ENCODE measurements at regions of chr2 and their contacts with region 1.

Region 1: GRCh38 chr2:73985308-73986084 is 786 bp downstream of the TET3 start:
- DNase-seq: peak; percentile 76 to 90 (median 87)
- H3K4me3 ChIP-seq: peak overlapping the region; percentile 69 to 83 (median 78)
- H3K4me3 Mint-ChIP-seq: peak overlapping the region; percentile 93 to 94
- H3K27ac ChIP-seq: peak overlapping the region; percentile 85 to 94
- H3K27ac Mint-ChIP-seq: peak overlapping the region; percentile 88 to 94 (median 93)
- H3K4me1 ChIP-seq: peaks cover 73 to 89% of the 10 kb centered on the region in 2 donors
- H3K4me1 Mint-ChIP-seq: peaks cover 82% of the 10 kb centered on the region
- H3K27me3 ChIP-seq: no peaks in the 10 kb centered on the region
- H3K27me3 Mint-ChIP-seq: peaks cover 0 to 3% (median 0%) of the 10 kb centered on the region in 3 donors
- CTCF ChIP-seq: no peak

Region 2: GRCh38 chr2:73828818-73829570 is 156.5 kb before region 1 on chr2 and contains the start of gene STAMBP:
- intact Hi-C with region 1: loop called in 1 of 2 experiments (anchors 10 kb)
- DNase-seq: peak; percentile 92 to 97 (median 95)
- H3K4me3 ChIP-seq: peak within 1 kb of the TSS; percentile 61 to 83 (median 69)
- H3K4me3 Mint-ChIP-seq: peak within 1 kb of the TSS; percentile 92 to 96
- H3K27ac ChIP-seq: peak within 1 kb of the TSS; percentile 79 to 94
- H3K27ac Mint-ChIP-seq: peak within 1 kb of the TSS; percentile 94 to 99 (median 98)
- H3K4me1 ChIP-seq: peaks cover 14 to 26% of the 10 kb centered on the region in 2 donors
- H3K4me1 Mint-ChIP-seq: peaks cover 25% of the 10 kb centered on the region
- H3K27me3 ChIP-seq: no peaks in the 10 kb centered on the region
- H3K27me3 Mint-ChIP-seq: peaks cover 0 to 2% (median 2%) of the 10 kb centered on the region in 3 donors
- CTCF ChIP-seq: no peak
- polyA plus RNA-seq, gene STAMBP: 26.0 to 40.8 (median 40.7) TPM

Region 3: GRCh38 chr2:73926493-73927338 is 58.8 kb before region 1 on chr2 and contains the start of gene DGUOK:
- intact Hi-C with region 1: loop called (anchors 5 kb)
- DNase-seq: peak; percentile 99 to 100 (median 99)
- H3K4me3 ChIP-seq: peak within 1 kb of the TSS; percentile 60 to 76 (median 74)
- H3K4me3 Mint-ChIP-seq: peak within 1 kb of the TSS; percentile 80 to 92
- H3K27ac ChIP-seq: peak within 1 kb of the TSS; percentile 98
- H3K27ac Mint-ChIP-seq: peak within 1 kb of the TSS; percentile 97 to 99 (median 98)
- H3K4me1 ChIP-seq: peaks cover 53 to 72% of the 10 kb centered on the region in 2 donors
- H3K4me1 Mint-ChIP-seq: peaks cover 59% of the 10 kb centered on the region
- H3K27me3 ChIP-seq: no peaks in the 10 kb centered on the region
- H3K27me3 Mint-ChIP-seq: peaks cover 0 to 2% (median 0%) of the 10 kb centered on the region in 3 donors
- CTCF ChIP-seq: no peak
- polyA plus RNA-seq, gene DGUOK: 62.9 to 129 (median 123) TPM

Region 4: GRCh38 chr2:73931531-73932500 is 53.7 kb before region 1 on chr2:
- intact Hi-C with region 1: loop called (anchors 5 kb)
- DNase-seq: peak in 2 of 3 donors; percentile 28 to 66
- H3K4me3 ChIP-seq: no peak overlapping the region
- H3K4me3 Mint-ChIP-seq: no peak overlapping the region
- H3K27ac ChIP-seq: peak overlapping the region in 1 of 2 donors; percentile 61
- H3K27ac Mint-ChIP-seq: peak overlapping the region in 5 of 7 donors; percentile 35 to 81 (median 67)
- H3K4me1 ChIP-seq: peaks cover 40 to 57% of the 10 kb centered on the region in 2 donors
- H3K4me1 Mint-ChIP-seq: peaks cover 60% of the 10 kb centered on the region
- H3K27me3 ChIP-seq: no peaks in the 10 kb centered on the region
- H3K27me3 Mint-ChIP-seq: peaks cover 0 to 2% (median 0%) of the 10 kb centered on the region in 3 donors
- CTCF ChIP-seq: no peak

Region 5: DNA sequence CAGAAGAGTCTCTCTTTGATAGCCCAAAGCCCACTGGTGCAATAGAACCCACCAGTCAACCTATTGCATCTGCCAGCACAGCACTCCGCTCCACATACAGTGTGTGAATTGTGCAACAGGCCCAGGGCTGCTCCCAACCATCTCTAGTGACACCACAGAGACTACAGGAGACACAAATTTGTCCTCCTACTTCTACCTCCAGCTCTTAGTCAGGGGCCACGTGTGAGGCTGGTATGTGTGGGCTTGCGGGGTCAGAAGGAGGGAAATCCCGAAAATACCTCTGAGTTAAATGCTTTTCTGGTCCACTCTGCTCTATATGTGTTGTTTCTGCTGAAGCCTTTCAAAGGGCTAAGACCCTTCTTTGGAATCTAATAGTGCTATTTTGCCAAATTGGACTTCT is 40.8 kb before region 1 on chr2:
- intact Hi-C with region 1: loop called in 1 of 2 experiments (anchors 5 kb)
- DNase-seq: no peak
- H3K4me3 ChIP-seq: no peak overlapping the region
- H3K4me3 Mint-ChIP-seq: no peak overlapping the region
- H3K27ac ChIP-seq: peak overlapping the region in 1 of 2 donors; percentile 33
- H3K27ac Mint-ChIP-seq: peak overlapping the region in 3 of 7 donors; percentile 6 to 57 (median 34)
- H3K4me1 ChIP-seq: peaks cover 36% of the 10 kb centered on the region in 2 donors
- H3K4me1 Mint-ChIP-seq: peaks cover 49% of the 10 kb centered on the region
- H3K27me3 ChIP-seq: no peaks in the 10 kb centered on the region
- H3K27me3 Mint-ChIP-seq: no peaks in the 10 kb centered on the region
- CTCF ChIP-seq: no peak

Region 6: GRCh38 chr2:73952499-73953458 is 32.7 kb before region 1 on chr2:
- intact Hi-C with region 1: loop called (anchors 5 kb)
- DNase-seq: peak; percentile 72 to 89 (median 82)
- H3K4me3 ChIP-seq: peak overlapping the region in 1 of 3 experiments; percentile 13
- H3K4me3 Mint-ChIP-seq: peak overlapping the region in 1 of 2 donors; percentile 65
- H3K27ac ChIP-seq: peak overlapping the region; percentile 39 to 64
- H3K27ac Mint-ChIP-seq: peak overlapping the region; percentile 79 to 91 (median 82)
- H3K4me1 ChIP-seq: peaks cover 57 to 58% of the 10 kb centered on the region in 2 donors
- H3K4me1 Mint-ChIP-seq: peaks cover 57% of the 10 kb centered on the region
- H3K27me3 ChIP-seq: no peaks in the 10 kb centered on the region
- H3K27me3 Mint-ChIP-seq: no peaks in the 10 kb centered on the region
- CTCF ChIP-seq: no peak

Region 7: DNA sequence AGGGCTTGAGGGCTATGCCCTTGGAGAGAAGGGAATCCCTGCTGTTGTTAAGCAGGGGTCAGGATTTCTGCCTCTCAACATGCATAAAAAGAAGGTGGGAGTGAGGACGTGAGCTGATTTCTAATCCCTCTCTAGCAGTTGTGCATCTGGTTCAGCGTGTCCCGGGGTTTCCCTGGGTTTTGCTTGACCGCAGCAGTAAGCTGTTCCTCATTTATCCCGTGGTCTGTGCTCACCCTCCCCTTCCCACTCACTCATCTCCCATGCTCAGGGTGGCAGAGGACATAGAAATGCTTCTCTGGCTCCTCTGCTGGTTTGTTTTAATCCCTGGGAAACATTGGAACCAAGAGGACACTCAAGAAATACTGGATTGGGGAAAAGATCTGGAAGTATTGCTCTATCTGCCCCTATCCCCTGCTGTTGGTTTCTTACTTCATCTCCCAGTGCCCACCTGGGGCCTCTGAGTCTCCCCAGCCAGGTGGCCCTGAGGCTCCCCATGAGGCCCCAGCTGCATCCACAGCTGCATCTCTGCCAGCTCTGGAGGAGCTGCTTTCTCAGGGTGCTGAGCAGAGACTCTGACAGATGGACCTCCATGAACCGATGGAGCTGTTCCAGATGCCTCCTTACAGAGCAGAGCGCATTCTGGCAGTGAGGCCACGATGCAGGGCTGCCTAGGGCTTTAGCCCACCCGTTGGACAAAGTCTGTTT is 35.4 kb after region 1 on chr2:
- intact Hi-C with region 1: loop called in 1 of 2 experiments (anchors 5 kb)
- DNase-seq: peak; percentile 56 to 89 (median 71)
- H3K4me3 ChIP-seq: no peak overlapping the region
- H3K4me3 Mint-ChIP-seq: peak overlapping the region; percentile 4 to 46
- H3K27ac ChIP-seq: peak overlapping the region; percentile 2 to 73
- H3K27ac Mint-ChIP-seq: peak overlapping the region; percentile 70 to 89 (median 77)
- H3K4me1 ChIP-seq: peaks cover 32 to 42% of the 10 kb centered on the region in 2 donors
- H3K4me1 Mint-ChIP-seq: peaks cover 53% of the 10 kb centered on the region
- H3K27me3 ChIP-seq: no peaks in the 10 kb centered on the region
- H3K27me3 Mint-ChIP-seq: no peaks in the 10 kb centered on the region
- CTCF ChIP-seq: no peak

Region 8: GRCh38 chr2:74267068-74267467 is 281.6 kb after region 1 on chr2:
- intact Hi-C with region 1: no loop called
- DNase-seq: no peak
- H3K4me3 ChIP-seq: no peak overlapping the region
- H3K4me3 Mint-ChIP-seq: no peak overlapping the region
- H3K27ac ChIP-seq: no peak overlapping the region
- H3K27ac Mint-ChIP-seq: no peak overlapping the region
- H3K4me1 ChIP-seq: no peaks in the 10 kb centered on the region
- H3K4me1 Mint-ChIP-seq: peaks cover 5% of the 10 kb centered on the region
- H3K27me3 ChIP-seq: no peaks in the 10 kb centered on the region
- H3K27me3 Mint-ChIP-seq: peaks cover 0 to 2% (median 0%) of the 10 kb centered on the region in 3 donors
- CTCF ChIP-seq: no peak

Measured in CD14-positive monocyte (primary cell).